Posterior vena cava (tissue), 2 donors: ENCODE measurements at regions of chr7 and their contacts with region 1.

Region 1: DNA sequence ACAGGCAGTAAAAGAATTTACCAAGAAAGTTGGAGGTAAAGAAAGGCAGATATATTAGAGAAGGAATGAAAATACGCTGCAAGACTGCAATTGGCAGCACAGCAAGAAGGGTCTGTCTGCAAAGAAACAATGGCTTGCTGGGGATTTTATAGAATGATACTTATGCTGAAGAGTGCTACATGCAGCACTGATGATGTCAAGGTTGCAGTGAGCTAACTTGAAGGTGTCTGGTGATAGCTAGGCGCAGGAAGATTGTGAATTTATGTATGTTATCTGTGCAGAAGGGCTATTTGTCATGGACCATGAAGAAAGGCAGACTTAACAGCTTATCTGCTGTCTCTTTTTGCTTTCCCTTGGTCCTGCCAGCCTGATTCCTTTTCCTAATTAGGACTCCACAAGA is 319.3 kb upstream of the KMT2E start:
- DNase-seq: no peak

Region 2: DNA sequence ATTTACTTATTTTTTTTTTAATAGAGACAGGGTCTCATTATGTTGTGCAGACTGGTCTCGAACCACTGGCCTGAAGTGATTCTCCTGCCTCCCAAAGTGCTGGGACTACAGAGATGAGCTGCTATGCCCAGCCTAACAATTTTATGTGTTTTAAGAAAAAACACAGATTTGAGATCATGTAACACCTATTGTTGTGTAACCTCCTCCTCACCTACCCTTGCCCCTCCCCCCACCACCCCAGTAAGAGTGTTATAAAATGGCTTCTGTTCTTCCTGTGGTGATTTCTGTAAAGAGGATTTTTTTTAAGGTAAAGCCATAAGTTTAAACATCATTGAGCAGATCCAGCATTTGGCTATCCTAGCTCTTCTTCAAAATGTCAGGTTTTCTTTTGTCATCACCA is 1612.2 kb before region 1 on chr7:
- intact Hi-C with region 1: loop called in 1 of 2 experiments (anchors 10 kb)
- DNase-seq: no peak